ENCODE measurements at regions of chr12 and their contacts with region 1.

Region 1: DNA sequence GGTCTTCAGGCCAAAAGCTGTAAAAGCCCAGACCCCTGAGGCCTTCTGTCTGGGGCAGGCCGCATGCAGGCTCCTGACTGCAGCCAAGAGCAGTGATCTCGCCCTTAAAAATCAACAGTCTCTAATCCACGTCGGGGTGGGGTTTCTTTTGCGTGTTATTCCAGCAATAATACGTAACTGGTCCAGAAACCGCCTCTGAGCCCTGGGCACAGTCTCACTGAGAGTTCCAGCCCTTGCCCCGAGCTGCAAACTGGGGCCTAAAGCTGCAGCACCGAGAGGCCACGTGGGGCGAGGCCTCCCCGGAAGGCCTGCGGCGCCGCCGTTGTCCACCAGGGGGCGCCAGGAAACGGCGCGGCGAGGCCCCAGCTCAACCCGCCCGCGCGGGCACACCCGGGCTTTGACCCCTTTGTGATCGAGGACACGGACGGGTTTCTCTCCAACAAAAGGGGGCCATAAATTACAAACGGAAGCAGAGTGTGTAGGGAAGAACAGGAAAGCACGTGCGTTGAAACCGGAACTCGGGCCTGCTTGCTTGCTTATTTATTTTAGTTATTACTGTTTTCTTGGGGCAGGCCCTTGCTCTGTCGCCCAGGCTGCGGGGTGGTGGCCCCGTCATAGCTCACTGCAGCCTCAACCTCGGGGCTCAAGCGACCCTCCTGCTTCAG is 87.2 kb downstream of the NINJ2 start:
- DNase-seq: no peak
- H3K4me3 ChIP-seq: no peak overlapping the region
- H3K27me3 ChIP-seq: no peaks in the 10 kb centered on the region
- CTCF ChIP-seq: peak; percentile 83

Region 2: GRCh38 chr12:761256-761655 is 185.2 kb after region 1 on chr12:
- CTCF ChIA-PET with region 1: interaction called, 15 read pairs
- POLR2A ChIA-PET with region 1: no interaction called
- DNase-seq: no peak
- H3K4me3 ChIP-seq: no peak overlapping the region
- H3K27me3 ChIP-seq: no peaks in the 10 kb centered on the region
- CTCF ChIP-seq: no peak

Region 3: GRCh38 chr12:810671-811415 is 234.8 kb after region 1 on chr12:
- CTCF ChIA-PET with region 1: interaction called, 64 read pairs
- POLR2A ChIA-PET with region 1: interaction called, 3 read pairs
- DNase-seq: no peak
- H3K4me3 ChIP-seq: no peak overlapping the region
- H3K27me3 ChIP-seq: no peaks in the 10 kb centered on the region
- CTCF ChIP-seq: no peak

Region 4: DNA sequence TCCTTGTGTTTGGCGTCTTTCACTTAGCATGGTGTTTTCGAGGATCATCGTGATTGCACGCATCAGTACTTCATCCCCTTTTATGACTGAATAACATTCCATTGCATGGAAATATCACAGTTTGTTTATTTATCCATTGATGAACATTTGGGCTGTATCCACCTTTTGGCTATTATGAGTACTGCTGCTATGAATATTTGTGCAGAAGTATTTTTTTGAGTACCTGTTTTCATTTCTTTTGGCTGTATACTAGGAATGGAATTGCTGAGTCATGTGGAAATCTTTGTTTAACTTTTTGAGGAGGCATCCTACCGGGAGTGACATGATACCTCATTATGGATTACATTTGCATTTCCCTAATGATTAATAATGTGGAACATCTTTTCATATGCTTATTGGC is 242.7 kb after region 1 on chr12:
- CTCF ChIA-PET with region 1: interaction called, 64 read pairs
- POLR2A ChIA-PET with region 1: no interaction called
- DNase-seq: no peak
- H3K4me3 ChIP-seq: no peak overlapping the region
- H3K27me3 ChIP-seq: no peaks in the 10 kb centered on the region
- CTCF ChIP-seq: no peak

Measured in BJ (cell line).